GM12878 (cell line): ENCODE measurements at regions of chr1 and their contacts with region 1.

Region 1: GRCh38 chr1:27332536-27333281 is 9.1 kb upstream of the SYTL1 start:
- DNase-seq: no peak
- ATAC-seq: peak; percentile 95
- H3K4me3 ChIP-seq: no peak overlapping the region
- H3K27ac ChIP-seq: no peak overlapping the region
- H3K4me1 ChIP-seq: no peaks in the 10 kb centered on the region
- H3K27me3 ChIP-seq: no peaks in the 10 kb centered on the region
- CTCF ChIP-seq: peak; percentile 63 to 88 (median 86)
- EP300 ChIP-seq: no peak
- POLR2A ChIP-seq: 0 out of 2 replicates have a peak, but pooled peaks have one; percentile 25
- RAD21 ChIP-seq: peak; percentile 57; the same call in 1 of the 2 replicates

Region 2: GRCh38 chr1:27161594-27161993 is 171.1 kb before region 1 on chr1:
- CTCF ChIA-PET with region 1: no interaction called
- POLR2A ChIA-PET with region 1: no interaction called
- RAD21 ChIA-PET with region 1: no interaction called
- SMC1A ChIA-PET with region 1: no interaction called
- in situ Hi-C with region 1: no loop called
- intact Hi-C with region 1: no loop called
- DNase-seq: peak; percentile 65
- ATAC-seq: peak; percentile 96
- H3K4me3 ChIP-seq: no peak overlapping the region
- H3K27ac ChIP-seq: peak overlapping the region; percentile 58; the same call in 1 of the 2 replicates
- H3K4me1 ChIP-seq: peaks cover 12% of the 10 kb centered on the region
- H3K27me3 ChIP-seq: no peaks in the 10 kb centered on the region
- CTCF ChIP-seq: no peak
- EP300 ChIP-seq: no peak
- POLR2A ChIP-seq: peak; percentile 33; the same call in 1 of the 2 replicates
- RAD21 ChIP-seq: no peak

Region 3: GRCh38 chr1:27306892-27307761 is 25.6 kb before region 1 on chr1:
- CTCF ChIA-PET with region 1: interaction called, 32 read pairs
- POLR2A ChIA-PET with region 1: no interaction called
- RAD21 ChIA-PET with region 1: no interaction called
- SMC1A ChIA-PET with region 1: no interaction called
- in situ Hi-C with region 1: no loop called
- intact Hi-C with region 1: no loop called
- DNase-seq: no peak
- ATAC-seq: peak; percentile 36
- H3K4me3 ChIP-seq: no peak overlapping the region
- H3K27ac ChIP-seq: no peak overlapping the region
- H3K4me1 ChIP-seq: no peaks in the 10 kb centered on the region
- H3K27me3 ChIP-seq: no peaks in the 10 kb centered on the region
- CTCF ChIP-seq: 0 out of 6 replicates have a peak, but pooled peaks of 1 of the 3 experiments have one; percentile 7
- EP300 ChIP-seq: no peak
- POLR2A ChIP-seq: no peak
- RAD21 ChIP-seq: no peak

Region 4: GRCh38 chr1:27321813-27322577 is 10.7 kb before region 1 on chr1 and contains the start of gene TMEM222:
- CTCF ChIA-PET with region 1: interaction called, 22 read pairs
- POLR2A ChIA-PET with region 1: interaction called, 5 read pairs
- RAD21 ChIA-PET with region 1: interaction called, 4 read pairs
- SMC1A ChIA-PET with region 1: interaction called, 8 read pairs
- in situ Hi-C with region 1: no loop called
- intact Hi-C with region 1: no loop called
- DNase-seq: peak; percentile 76
- ATAC-seq: peak; percentile 98
- H3K4me3 ChIP-seq: peak within 1 kb of the TSS; percentile 95
- H3K27ac ChIP-seq: peak within 1 kb of the TSS; percentile 96
- H3K4me1 ChIP-seq: no peaks in the 10 kb centered on the region
- H3K27me3 ChIP-seq: no peaks in the 10 kb centered on the region
- CTCF ChIP-seq: no peak
- EP300 ChIP-seq: peak in 1 of 2 experiments; percentile 63; a peak in 2 of 4 replicates
- POLR2A ChIP-seq: peak; percentile 93
- RAD21 ChIP-seq: no peak
- polyA plus RNA-seq, gene TMEM222: 3.8 to 7.8 TPM

Region 5: GRCh38 chr1:27346991-27347627 is 14.4 kb after region 1 on chr1:
- CTCF ChIA-PET with region 1: interaction called, 23 read pairs
- POLR2A ChIA-PET with region 1: no interaction called
- RAD21 ChIA-PET with region 1: interaction called, 3 read pairs
- SMC1A ChIA-PET with region 1: interaction called, 4 read pairs
- in situ Hi-C with region 1: no loop called
- intact Hi-C with region 1: no loop called
- DNase-seq: no peak
- ATAC-seq: no peak
- H3K4me3 ChIP-seq: no peak overlapping the region
- H3K27ac ChIP-seq: no peak overlapping the region
- H3K4me1 ChIP-seq: peaks cover 18% of the 10 kb centered on the region
- H3K27me3 ChIP-seq: no peaks in the 10 kb centered on the region
- CTCF ChIP-seq: no peak
- EP300 ChIP-seq: no peak
- POLR2A ChIP-seq: no peak
- RAD21 ChIP-seq: no peak

Region 6: GRCh38 chr1:27357281-27358037 is 24.8 kb after region 1 on chr1:
- CTCF ChIA-PET with region 1: interaction called, 10 read pairs
- POLR2A ChIA-PET with region 1: no interaction called
- RAD21 ChIA-PET with region 1: no interaction called
- SMC1A ChIA-PET with region 1: interaction called, 5 read pairs
- in situ Hi-C with region 1: no loop called
- intact Hi-C with region 1: no loop called
- DNase-seq: no peak
- ATAC-seq: peak; percentile 88
- H3K4me3 ChIP-seq: peak overlapping the region; percentile 54; the same call in 1 of the 2 replicates
- H3K27ac ChIP-seq: no peak overlapping the region
- H3K4me1 ChIP-seq: peaks cover 13% of the 10 kb centered on the region
- H3K27me3 ChIP-seq: no peaks in the 10 kb centered on the region; a peak in 1 of 4 replicates
- CTCF ChIP-seq: peak; percentile 90 to 96 (median 93); a peak in 5 of 6 replicates
- EP300 ChIP-seq: no peak
- POLR2A ChIP-seq: no peak
- RAD21 ChIP-seq: peak; percentile 49

Region 7: DNA sequence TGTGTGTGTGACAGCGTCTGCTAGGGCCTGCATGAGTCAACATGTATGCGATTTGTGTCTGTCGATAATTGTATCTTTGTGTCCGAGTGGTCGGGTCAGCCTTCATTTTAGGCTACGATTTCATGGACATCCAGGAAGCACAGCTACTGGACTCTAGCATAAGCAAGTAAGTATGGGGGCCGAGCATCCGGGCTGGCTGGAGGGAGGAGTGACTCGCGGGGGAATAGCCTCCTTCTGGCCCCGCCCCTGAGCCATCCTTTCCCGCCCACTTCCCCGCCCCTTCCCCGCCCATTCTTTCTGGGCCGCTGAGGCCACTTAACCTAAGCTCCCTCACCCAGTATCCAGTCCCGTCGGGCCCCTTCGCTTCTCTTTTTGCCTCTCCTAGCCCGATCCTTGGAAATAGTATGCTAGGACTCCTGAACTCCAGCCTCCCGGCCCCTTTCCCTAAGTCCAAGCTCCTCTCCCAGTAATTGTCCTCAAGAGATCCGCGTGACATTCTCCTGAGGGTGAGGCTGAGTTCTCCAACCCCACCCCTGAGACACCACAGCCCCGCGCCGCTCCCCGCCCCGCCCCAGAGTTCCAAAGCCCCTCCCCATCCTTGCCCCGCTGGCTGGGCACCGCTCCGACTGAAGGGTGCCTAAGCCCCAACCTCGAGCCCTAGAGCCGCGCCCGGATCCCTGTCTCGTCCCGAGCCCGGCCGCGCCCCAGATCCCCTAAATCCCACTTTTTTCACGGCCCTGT is 32.8 kb after region 1 on chr1:
- CTCF ChIA-PET with region 1: interaction called, 14 read pairs
- POLR2A ChIA-PET with region 1: interaction called, 3 read pairs
- RAD21 ChIA-PET with region 1: interaction called, 9 read pairs
- SMC1A ChIA-PET with region 1: no interaction called
- in situ Hi-C with region 1: no loop called
- intact Hi-C with region 1: no loop called
- DNase-seq: no peak
- ATAC-seq: peak; percentile 83
- H3K4me3 ChIP-seq: peak overlapping the region; percentile 76
- H3K27ac ChIP-seq: no peak overlapping the region
- H3K4me1 ChIP-seq: peaks cover 15% of the 10 kb centered on the region
- H3K27me3 ChIP-seq: no peaks in the 10 kb centered on the region
- CTCF ChIP-seq: no peak
- EP300 ChIP-seq: 0 out of 4 replicates have a peak, but pooled peaks of 1 of the 2 experiments have one; percentile 18
- POLR2A ChIP-seq: peak; percentile 50
- RAD21 ChIP-seq: no peak

Region 8: DNA sequence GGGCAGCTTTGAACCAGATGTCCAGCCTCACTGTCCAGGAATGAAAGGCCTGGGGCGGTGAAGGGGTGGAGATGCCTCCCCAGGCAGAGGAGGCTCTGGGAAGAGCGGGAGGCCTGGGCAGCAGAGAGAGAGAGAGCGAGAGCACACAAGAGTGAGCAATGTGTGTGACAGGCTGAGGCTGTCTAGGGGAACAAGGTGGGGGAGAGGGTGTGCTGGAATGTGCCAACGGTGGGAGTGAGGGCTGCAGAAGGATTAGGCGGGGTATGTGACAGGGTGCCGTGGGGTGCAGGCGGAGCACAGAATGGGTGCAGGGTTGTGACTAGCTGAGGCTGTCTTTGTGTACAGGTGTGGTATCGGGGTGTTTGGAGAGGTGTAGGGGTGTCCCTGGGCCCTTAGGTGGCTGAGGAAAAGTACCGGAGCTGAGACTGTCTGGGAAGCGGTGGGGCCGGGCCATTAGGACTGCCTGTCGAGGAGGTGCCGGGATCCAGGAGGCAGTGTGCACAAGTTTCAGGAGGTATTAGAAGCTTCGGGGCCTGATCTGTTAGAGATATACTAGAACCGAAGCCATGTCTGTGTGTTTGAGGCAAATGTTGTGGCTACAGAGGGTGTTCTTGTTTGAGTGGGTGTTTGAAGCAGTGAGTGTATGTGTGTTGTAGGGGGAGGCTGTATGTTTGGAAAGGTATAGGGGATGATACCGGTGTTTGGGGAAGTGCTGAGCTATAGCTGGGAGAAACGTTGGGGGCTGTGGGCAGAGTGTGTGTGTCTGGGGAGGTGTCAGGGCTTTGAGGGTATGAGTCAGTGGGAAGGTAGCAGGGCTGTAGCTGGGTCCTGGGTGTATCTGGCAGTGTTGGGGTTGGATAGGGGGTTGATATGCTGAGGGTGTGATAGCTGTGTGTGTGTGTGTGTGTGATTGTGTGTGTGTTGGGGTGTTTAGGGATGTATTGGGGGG is 262.1 kb after region 1 on chr1:
- CTCF ChIA-PET with region 1: no interaction called
- POLR2A ChIA-PET with region 1: no interaction called
- RAD21 ChIA-PET with region 1: no interaction called
- SMC1A ChIA-PET with region 1: no interaction called
- in situ Hi-C with region 1: no loop called
- intact Hi-C with region 1: no loop called
- DNase-seq: no peak
- ATAC-seq: peak; percentile 15; the same call in 2 of the 3 replicates
- H3K4me3 ChIP-seq: no peak overlapping the region
- H3K27ac ChIP-seq: no peak overlapping the region
- H3K4me1 ChIP-seq: peaks cover 40% of the 10 kb centered on the region
- H3K27me3 ChIP-seq: no peaks in the 10 kb centered on the region
- CTCF ChIP-seq: no peak
- EP300 ChIP-seq: no peak
- POLR2A ChIP-seq: no peak
- RAD21 ChIP-seq: no peak